GM10248 (cell line): ENCODE measurements at regions of chr2 and their contacts with region 1.

Region 1: DNA sequence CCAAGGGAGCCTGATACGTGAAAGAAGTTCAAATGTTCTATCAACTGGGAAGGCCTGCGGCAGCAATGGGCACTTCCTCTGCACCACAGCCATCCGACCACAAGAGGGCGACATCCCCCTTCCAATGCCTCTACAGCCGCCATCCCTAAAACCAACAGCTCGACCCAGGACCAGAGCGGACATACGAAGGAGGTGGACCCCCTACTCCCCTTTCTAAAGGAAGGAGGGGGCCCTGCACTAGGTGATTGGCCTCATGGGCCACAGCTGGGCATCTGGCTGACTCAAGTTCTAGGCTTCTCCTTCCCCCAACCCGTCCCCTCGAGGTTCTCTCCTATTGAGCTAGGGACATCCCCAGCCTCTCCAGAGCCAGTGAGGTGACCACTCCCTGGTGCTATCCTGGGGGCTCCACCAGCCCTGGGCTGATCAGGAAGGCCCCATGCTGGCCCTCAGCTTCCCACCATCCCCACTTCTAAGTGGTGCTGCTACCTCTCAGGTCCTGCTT is 217.2 kb downstream of the TNS1 start:
- DNase-seq: peak; percentile 84
- CTCF ChIP-seq: peak; percentile 96

Region 2: DNA sequence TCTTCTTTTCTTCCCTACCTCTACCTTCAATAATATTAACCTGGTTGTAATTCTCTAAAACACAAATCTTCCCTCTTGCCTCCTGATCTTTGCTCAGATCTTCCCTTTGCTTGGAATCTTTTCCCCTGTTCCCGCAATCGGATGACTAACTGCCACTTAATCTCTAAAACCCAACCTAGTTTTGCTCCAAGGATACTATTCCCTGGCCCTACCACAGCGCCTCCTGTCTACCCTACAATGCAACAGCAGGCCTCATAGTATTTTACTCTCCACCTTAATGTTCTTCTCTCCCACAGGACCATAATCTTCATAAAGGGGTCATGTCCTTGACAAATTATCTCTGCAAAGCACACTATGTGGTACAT is 679.0 kb before region 1 on chr2:
- CTCF ChIA-PET with region 1: no interaction called
- POLR2A ChIA-PET with region 1: no interaction called
- DNase-seq: no peak
- CTCF ChIP-seq: peak; percentile 30

Region 3: GRCh38 chr2:217610401-217611075 is 175.1 kb before region 1 on chr2:
- CTCF ChIA-PET with region 1: no interaction called
- POLR2A ChIA-PET with region 1: no interaction called
- DNase-seq: peak; percentile 35
- CTCF ChIP-seq: no peak

Region 4: GRCh38 chr2:217761645-217762277 is 23.8 kb before region 1 on chr2:
- CTCF ChIA-PET with region 1: interaction called, 12 read pairs
- POLR2A ChIA-PET with region 1: no interaction called
- DNase-seq: no peak
- CTCF ChIP-seq: no peak

Region 5: GRCh38 chr2:217886720-217887309 is 101.2 kb after region 1 on chr2:
- CTCF ChIA-PET with region 1: interaction called, 314 read pairs
- POLR2A ChIA-PET with region 1: no interaction called
- DNase-seq: peak; percentile 80
- CTCF ChIP-seq: peak; percentile 66

Region 6: GRCh38 chr2:217993817-217994463 is 208.3 kb after region 1 on chr2:
- CTCF ChIA-PET with region 1: interaction called, 132 read pairs
- POLR2A ChIA-PET with region 1: no interaction called
- DNase-seq: peak; percentile 80
- CTCF ChIP-seq: peak; percentile 78

Region 7: GRCh38 chr2:218046238-218046637 is 260.6 kb after region 1 on chr2:
- CTCF ChIA-PET with region 1: interaction called, 16 read pairs
- POLR2A ChIA-PET with region 1: no interaction called
- DNase-seq: no peak
- CTCF ChIP-seq: no peak

Region 8: GRCh38 chr2:218081063-218081462 is 295.5 kb after region 1 on chr2:
- CTCF ChIA-PET with region 1: interaction called, 11 read pairs
- POLR2A ChIA-PET with region 1: no interaction called
- DNase-seq: peak; percentile 63
- CTCF ChIP-seq: no peak